IMR-90 (cell line): ENCODE measurements at regions of chr13 and their contacts with region 1.

Region 1: GRCh38 chr13:30388406-30389283 is 33.6 kb upstream of the UBE2L5 start:
- DNase-seq: peak; percentile 89
- ATAC-seq: peak; percentile 91
- H3K4me3 ChIP-seq: peak overlapping the region; percentile 31; the same call in 1 of the 2 replicates
- H3K27ac ChIP-seq: peak overlapping the region; percentile 87
- H3K4me1 ChIP-seq: peaks cover 8% of the 10 kb centered on the region
- H3K27me3 ChIP-seq: no peaks in the 10 kb centered on the region
- CTCF ChIP-seq: no peak
- POLR2A ChIP-seq: peak; percentile 39; the same call in 1 of the 2 replicates
- RAD21 ChIP-seq: no peak

Region 2: GRCh38 chr13:30341815-30342570 is 46.7 kb before region 1 on chr13:
- CTCF ChIA-PET with region 1: no interaction called
- POLR2A ChIA-PET with region 1: no interaction called
- dilution Hi-C with region 1: no loop called
- in situ Hi-C with region 1: no loop called
- intact Hi-C with region 1: loop called (anchors 5 kb)
- DNase-seq: peak; percentile 94
- ATAC-seq: peak; percentile 89
- H3K4me3 ChIP-seq: no peak overlapping the region
- H3K27ac ChIP-seq: peak overlapping the region; percentile 60; the same call in 1 of the 2 replicates
- H3K4me1 ChIP-seq: peaks cover 32% of the 10 kb centered on the region
- H3K27me3 ChIP-seq: no peaks in the 10 kb centered on the region
- CTCF ChIP-seq: no peak
- POLR2A ChIP-seq: no peak
- RAD21 ChIP-seq: no peak